ENCODE measurements at regions of chr20 and their contacts with region 1.

Region 1: DNA sequence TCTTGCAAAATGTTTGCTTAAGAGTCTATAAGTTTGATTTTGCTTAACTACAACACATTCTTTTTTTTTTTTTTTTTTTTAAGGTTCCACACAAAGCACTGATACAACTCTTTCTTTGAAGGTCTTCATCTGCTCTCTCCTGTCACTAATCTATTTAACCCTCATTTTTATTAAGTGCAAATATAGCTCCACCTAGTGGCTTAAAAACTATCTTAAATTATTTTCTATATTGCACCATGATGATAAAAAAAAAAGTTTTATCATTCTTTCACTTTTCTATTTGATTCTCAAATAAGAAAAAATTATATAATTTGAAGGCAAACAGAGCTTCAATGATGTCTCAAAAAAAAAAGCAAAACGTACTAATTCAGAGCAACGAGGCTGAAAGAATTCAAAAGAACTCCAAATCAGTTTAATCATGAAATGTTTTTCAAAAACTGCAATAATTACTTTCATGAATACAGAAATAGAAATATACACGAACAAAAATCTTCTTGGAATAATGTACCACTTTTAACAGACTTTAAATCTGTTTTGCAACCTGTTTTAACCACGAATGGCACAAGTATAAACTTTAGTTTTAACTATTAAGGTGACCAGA is 12.8 kb downstream of the ESF1 start:
- DNase-seq: no peak
- ATAC-seq: no peak
- H3K4me3 Mint-ChIP-seq: no peak overlapping the region
- H3K27ac Mint-ChIP-seq: no peak overlapping the region
- H3K4me1 Mint-ChIP-seq: peaks cover 10% of the 10 kb centered on the region
- H3K27me3 Mint-ChIP-seq: no peaks in the 10 kb centered on the region

Region 2: DNA sequence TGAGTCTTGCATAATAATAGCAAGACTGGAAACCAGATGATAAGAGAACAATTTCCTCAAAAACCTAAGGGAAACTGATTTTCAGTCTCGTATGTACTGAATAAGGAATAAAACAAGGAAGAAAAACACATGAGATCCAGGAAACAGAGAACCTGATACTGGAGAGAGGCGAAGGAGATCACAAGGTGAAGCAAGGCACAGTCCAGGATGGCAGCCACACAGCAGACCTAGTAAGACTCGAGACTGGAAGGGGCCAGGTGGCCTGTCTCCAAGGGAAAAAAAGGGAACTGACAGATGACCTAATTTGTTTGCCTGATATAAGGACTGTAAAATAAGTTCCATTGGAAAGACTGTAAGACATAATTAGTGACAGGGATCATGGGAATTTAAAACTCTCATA is 204.3 kb before region 1 on chr20:
- CTCF ChIA-PET with region 1: no interaction called
- DNase-seq: no peak
- ATAC-seq: no peak
- H3K4me3 Mint-ChIP-seq: no peak overlapping the region
- H3K27ac Mint-ChIP-seq: no peak overlapping the region
- H3K4me1 Mint-ChIP-seq: no peaks in the 10 kb centered on the region
- H3K27me3 Mint-ChIP-seq: no peaks in the 10 kb centered on the region

Region 3: DNA sequence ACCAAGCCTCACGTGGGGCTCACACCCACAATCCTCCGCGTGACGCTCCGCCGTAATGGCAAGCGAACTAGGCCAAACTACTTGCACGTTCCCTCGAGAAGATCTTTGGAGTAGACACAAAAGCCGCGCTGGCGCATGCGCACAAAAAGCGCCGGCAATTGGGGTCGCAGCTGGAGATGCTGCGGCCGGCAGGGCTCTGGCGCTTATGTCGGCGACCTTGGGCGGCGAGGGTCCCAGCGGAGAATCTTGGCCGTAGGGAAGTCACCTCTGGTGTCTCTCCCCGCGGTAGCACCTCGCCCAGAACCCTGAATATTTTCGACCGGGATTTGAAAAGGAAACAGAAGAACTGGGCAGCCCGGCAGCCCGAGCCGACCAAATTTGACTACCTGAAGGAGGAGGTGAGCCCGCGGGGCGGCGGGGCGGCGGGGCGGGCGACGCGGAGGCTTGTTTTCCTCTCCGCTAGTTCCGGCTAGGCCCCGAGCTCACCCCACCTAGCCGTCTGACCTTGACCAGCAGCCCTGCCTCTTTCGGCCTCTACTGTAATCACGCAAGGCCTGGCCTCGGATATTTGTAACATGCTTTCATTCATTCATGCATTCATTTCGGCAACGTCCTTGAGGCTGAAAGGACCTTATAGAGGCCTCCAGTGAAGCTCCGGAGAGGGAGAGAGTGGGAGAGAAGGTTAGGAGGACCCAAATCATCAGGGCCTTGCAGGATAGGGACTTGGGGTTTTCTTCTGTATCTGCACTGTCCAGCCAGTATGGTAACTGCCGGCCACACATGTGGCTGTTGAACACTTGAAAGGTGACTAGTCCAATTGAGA is 13.2 kb after region 1 on chr20 and contains the starts of genes ESF1 and NDUFAF5:
- CTCF ChIA-PET with region 1: interaction called, 25 read pairs
- DNase-seq: peak; percentile 97
- ATAC-seq: peak; percentile 98
- H3K4me3 Mint-ChIP-seq: peak within 1 kb of the TSS; percentile 89
- H3K27ac Mint-ChIP-seq: peak within 1 kb of the TSS; percentile 93
- H3K4me1 Mint-ChIP-seq: peaks cover 43% of the 10 kb centered on the region
- H3K27me3 Mint-ChIP-seq: no peaks in the 10 kb centered on the region
- total RNA-seq, gene ESF1: 11.8 to 17.3 TPM
- total RNA-seq, gene NDUFAF5: 29.7 to 31.2 TPM